Esophagus muscularis mucosa (tissue), 4 donors: ENCODE measurements at regions of chr18 and their contacts with region 1.

Region 1: GRCh38 chr18:37537868-37538525 is 27.6 kb downstream of the CELF4 start:
- DNase-seq: no peak
- H3K4me3 ChIP-seq: no peak overlapping the region
- H3K27ac ChIP-seq: no peak overlapping the region
- H3K4me1 ChIP-seq: peaks cover 0 to 6% (median 3%) of the 10 kb centered on the region in 4 donors
- H3K27me3 ChIP-seq: peaks cover 0 to 74% (median 9%) of the 10 kb centered on the region in 4 donors
- CTCF ChIP-seq: peak; percentile 76 to 94 (median 80)
- EP300 ChIP-seq: no peak
- POLR2A ChIP-seq: no peak

Region 2: DNA sequence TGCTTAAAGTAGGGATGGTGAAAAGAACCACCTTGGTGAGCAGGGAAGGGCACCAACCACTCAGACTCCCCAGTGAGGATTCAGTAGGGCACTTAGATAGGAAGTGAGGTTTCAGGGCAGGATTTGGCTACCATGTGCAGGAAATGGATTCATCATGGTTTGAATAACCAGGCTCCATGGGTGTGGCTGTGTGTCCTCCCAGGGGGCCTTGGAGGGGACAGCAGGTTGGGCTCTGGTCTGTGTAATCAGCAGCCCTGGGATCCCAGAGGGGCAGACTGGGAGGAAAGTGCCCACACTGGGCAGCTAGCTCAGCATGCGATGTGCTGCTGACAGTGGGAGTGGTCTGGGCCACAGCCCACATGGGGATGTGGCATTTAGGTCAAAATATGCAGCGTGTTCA is 197.0 kb before region 1 on chr18:
- intact Hi-C with region 1: loop called (anchors 5 kb)
- DNase-seq: no peak
- H3K4me3 ChIP-seq: no peak overlapping the region
- H3K27ac ChIP-seq: no peak overlapping the region
- H3K4me1 ChIP-seq: peaks cover 0 to 3% (median 1%) of the 10 kb centered on the region in 4 donors
- H3K27me3 ChIP-seq: peaks cover 0 to 38% (median 0%) of the 10 kb centered on the region in 4 donors
- CTCF ChIP-seq: no peak
- EP300 ChIP-seq: no peak
- POLR2A ChIP-seq: no peak

Region 3: DNA sequence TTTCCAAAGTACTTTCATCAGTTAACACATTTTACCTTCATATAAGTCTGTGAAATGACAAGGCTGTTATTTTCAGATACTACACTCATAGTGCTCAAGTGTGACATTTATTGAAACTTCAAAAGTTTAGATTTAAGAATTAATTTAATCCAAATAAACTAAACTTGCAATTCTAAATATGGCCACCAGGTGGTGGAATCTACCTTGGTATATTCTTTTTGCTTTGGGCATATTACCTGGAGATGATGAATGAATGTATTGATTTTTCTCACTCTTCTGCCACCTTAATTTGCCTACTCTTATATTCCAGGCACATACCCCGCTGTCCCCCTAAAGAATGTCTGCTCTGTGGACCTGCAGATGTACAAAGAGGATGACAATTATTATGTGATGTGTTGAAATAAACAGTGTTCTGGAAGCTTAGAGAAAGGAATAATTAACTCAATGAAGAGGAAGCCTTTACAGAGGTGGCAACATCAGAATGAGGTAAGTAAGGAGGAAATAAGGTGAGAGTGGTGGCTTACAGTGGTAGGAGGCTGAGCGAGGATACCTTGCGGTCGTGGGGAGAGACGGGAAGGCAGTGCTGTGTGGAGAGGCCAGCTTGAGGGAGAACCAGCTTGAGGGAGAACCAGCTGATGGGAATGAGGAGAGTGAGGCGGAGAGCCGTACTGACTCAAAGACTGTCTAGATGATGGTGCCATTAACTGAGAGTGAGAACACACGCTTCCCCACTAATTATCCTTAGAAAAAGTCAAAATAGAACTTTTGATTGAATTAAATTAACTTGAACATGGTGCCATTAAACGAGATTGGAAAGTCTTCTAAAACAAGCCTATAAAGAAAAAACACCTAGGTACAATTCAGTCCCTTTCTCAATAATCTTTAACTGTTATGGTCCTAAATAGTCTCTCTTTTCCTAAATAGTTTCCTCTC is 151.9 kb before region 1 on chr18:
- intact Hi-C with region 1: loop called (anchors 2 kb)
- DNase-seq: no peak
- H3K4me3 ChIP-seq: no peak overlapping the region
- H3K27ac ChIP-seq: no peak overlapping the region
- H3K4me1 ChIP-seq: no peaks in the 10 kb centered on the region
- H3K27me3 ChIP-seq: peaks cover 0 to 18% (median 3%) of the 10 kb centered on the region in 4 donors
- CTCF ChIP-seq: peak; percentile 56 to 72 (median 66)
- EP300 ChIP-seq: no peak
- POLR2A ChIP-seq: no peak

Region 4: GRCh38 chr18:37445368-37445767 is 92.6 kb before region 1 on chr18:
- intact Hi-C with region 1: loop called (anchors 5 kb)
- DNase-seq: no peak
- H3K4me3 ChIP-seq: no peak overlapping the region
- H3K27ac ChIP-seq: no peak overlapping the region
- H3K4me1 ChIP-seq: peaks cover 0 to 12% (median under 1%) of the 10 kb centered on the region in 4 donors
- H3K27me3 ChIP-seq: peaks cover 0 to 31% (median 0%) of the 10 kb centered on the region in 4 donors
- CTCF ChIP-seq: no peak
- EP300 ChIP-seq: no peak
- POLR2A ChIP-seq: no peak

Region 5: GRCh38 chr18:38115201-38115600 is 577.2 kb after region 1 on chr18:
- intact Hi-C with region 1: no loop called
- DNase-seq: no peak
- H3K4me3 ChIP-seq: no peak overlapping the region
- H3K27ac ChIP-seq: no peak overlapping the region
- H3K4me1 ChIP-seq: no peaks in the 10 kb centered on the region
- H3K27me3 ChIP-seq: no peaks in the 10 kb centered on the region
- CTCF ChIP-seq: no peak
- EP300 ChIP-seq: no peak
- POLR2A ChIP-seq: no peak